A549 (cell line): ENCODE measurements at regions of chr5 and their contacts with region 1.

Region 1: GRCh38 chr5:139968547-139969261 is 74.4 kb downstream of the NRG2 start:
- DNase-seq: peak; percentile 81 to 90
- ATAC-seq: peak; percentile 97 to 99
- H3K4me3 ChIP-seq: no peak overlapping the region
- H3K27ac ChIP-seq: no peak overlapping the region
- H3K4me1 ChIP-seq: no peaks in the 10 kb centered on the region
- CTCF ChIP-seq: peak; percentile 98
- EP300 ChIP-seq: no peak
- POLR2A ChIP-seq: no peak
- RAD21 ChIP-seq: peak; percentile 90 to 94

Region 2: DNA sequence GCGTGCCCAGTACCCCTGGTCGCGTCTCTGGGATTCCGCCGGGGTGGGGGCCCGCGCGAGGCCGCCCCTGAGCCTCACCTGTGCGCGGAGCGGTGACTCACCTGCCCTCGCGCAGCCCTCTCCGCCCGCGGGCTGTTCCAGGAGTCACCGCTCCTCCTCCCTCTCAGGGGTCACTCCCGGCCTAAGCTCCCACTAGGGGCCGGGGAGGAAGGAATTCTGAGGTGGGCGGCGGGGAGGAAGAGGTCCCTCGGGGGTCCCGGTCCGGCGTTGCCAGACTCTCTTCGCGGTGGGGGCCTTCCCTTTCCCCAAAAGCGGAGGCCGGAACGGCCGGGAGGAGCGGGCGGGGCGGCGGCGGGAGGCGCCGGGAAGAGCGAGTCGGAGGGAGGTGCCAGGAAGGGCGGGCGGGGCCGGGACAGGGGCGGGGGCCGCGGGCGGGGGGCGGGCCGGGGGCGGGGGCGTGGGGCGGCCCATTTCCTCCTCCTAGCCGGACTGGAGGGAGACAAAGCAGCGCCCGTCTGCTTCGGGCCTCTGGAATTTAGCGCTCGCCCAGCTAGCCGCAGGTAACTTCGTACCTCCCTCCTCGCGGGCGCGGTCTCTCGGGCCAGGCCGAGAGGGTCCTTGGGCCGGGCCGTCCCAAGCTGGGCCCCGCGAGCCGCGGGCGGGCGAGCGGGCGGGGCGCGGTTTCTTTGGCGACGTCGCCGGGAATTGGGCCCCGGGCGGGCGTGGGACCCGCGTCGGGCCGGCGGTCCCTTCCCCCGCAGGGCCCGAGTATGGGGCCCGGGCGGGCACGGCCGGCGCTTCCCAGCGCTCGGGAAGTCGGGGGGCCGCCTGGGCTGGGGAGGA is 1215.5 kb before region 1 on chr5 and contains the start of gene CTNNA1:
- CTCF ChIA-PET with region 1: no interaction called
- POLR2A ChIA-PET with region 1: no interaction called
- DNase-seq: peak; percentile 77 to 84
- ATAC-seq: peak; percentile 73 to 76
- H3K4me3 ChIP-seq: peak within 1 kb of the TSS; percentile 91
- H3K27ac ChIP-seq: peak within 1 kb of the TSS; percentile 96 to 97
- H3K4me1 ChIP-seq: peaks cover 42% of the 10 kb centered on the region
- CTCF ChIP-seq: no peak
- EP300 ChIP-seq: peak in 1 of 2 experiments; percentile 30; a peak in 1 of 5 replicates
- POLR2A ChIP-seq: peak; percentile 74
- RAD21 ChIP-seq: no peak
- polyA plus RNA-seq, gene CTNNA1: 154 and 190 TPM in 2 replicates

Region 3: GRCh38 chr5:139774980-139775661 is 193.6 kb before region 1 on chr5:
- CTCF ChIA-PET with region 1: interaction called, 45 read pairs
- POLR2A ChIA-PET with region 1: no interaction called
- DNase-seq: peak; percentile 63 to 83
- ATAC-seq: peak; percentile 90 to 98
- H3K4me3 ChIP-seq: no peak overlapping the region
- H3K27ac ChIP-seq: no peak overlapping the region
- H3K4me1 ChIP-seq: no peaks in the 10 kb centered on the region
- CTCF ChIP-seq: peak; percentile 71
- EP300 ChIP-seq: no peak
- POLR2A ChIP-seq: no peak
- RAD21 ChIP-seq: peak; percentile 44 to 45; a peak in 3 of 5 replicates

Region 4: GRCh38 chr5:139844472-139845145 is 124.1 kb before region 1 on chr5:
- CTCF ChIA-PET with region 1: interaction called, 21 read pairs
- POLR2A ChIA-PET with region 1: no interaction called
- DNase-seq: peak; percentile 85
- ATAC-seq: peak; percentile 67 to 89
- H3K4me3 ChIP-seq: no peak overlapping the region
- H3K27ac ChIP-seq: no peak overlapping the region
- H3K4me1 ChIP-seq: peaks cover 6% of the 10 kb centered on the region
- CTCF ChIP-seq: peak; percentile 85
- EP300 ChIP-seq: no peak
- POLR2A ChIP-seq: no peak
- RAD21 ChIP-seq: peak; percentile 70 to 81

Region 5: GRCh38 chr5:139895647-139896046 is 73.1 kb before region 1 on chr5:
- CTCF ChIA-PET with region 1: interaction called, 31 read pairs
- POLR2A ChIA-PET with region 1: no interaction called
- DNase-seq: no peak
- ATAC-seq: no peak
- H3K4me3 ChIP-seq: no peak overlapping the region
- H3K27ac ChIP-seq: no peak overlapping the region
- H3K4me1 ChIP-seq: no peaks in the 10 kb centered on the region
- CTCF ChIP-seq: no peak
- EP300 ChIP-seq: no peak
- POLR2A ChIP-seq: no peak
- RAD21 ChIP-seq: no peak

Region 6: GRCh38 chr5:139942243-139942642 is 26.5 kb before region 1 on chr5:
- CTCF ChIA-PET with region 1: interaction called, 18 read pairs
- POLR2A ChIA-PET with region 1: no interaction called
- DNase-seq: no peak
- ATAC-seq: no peak
- H3K4me3 ChIP-seq: no peak overlapping the region
- H3K27ac ChIP-seq: no peak overlapping the region
- H3K4me1 ChIP-seq: no peaks in the 10 kb centered on the region
- CTCF ChIP-seq: no peak
- EP300 ChIP-seq: no peak
- POLR2A ChIP-seq: no peak
- RAD21 ChIP-seq: no peak

Region 7: DNA sequence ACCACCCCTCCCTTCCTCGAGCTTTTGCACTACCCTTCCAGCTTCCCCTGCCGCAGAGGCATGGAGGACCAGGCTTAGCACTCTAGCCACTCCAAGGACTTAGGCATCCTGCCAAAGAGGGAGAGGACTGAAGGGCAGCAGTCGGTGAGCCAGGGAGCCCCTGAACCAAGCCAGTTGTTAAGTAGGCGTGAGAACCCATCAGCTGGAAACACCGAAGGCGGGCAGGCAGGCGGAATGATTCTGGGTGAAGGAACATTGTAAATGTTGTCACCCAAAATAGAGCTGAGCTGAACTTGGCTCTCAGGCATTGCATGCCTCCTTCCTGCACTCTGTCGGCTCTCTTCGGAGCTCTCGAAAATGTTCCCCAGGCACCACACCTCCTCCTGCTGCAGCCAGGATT is 31.6 kb after region 1 on chr5:
- CTCF ChIA-PET with region 1: interaction called, 13 read pairs
- POLR2A ChIA-PET with region 1: no interaction called
- DNase-seq: no peak
- ATAC-seq: no peak
- H3K4me3 ChIP-seq: no peak overlapping the region
- H3K27ac ChIP-seq: no peak overlapping the region
- H3K4me1 ChIP-seq: no peaks in the 10 kb centered on the region
- CTCF ChIP-seq: no peak
- EP300 ChIP-seq: no peak
- POLR2A ChIP-seq: no peak
- RAD21 ChIP-seq: no peak